ENCODE measurements at regions of chr7 and their contacts with region 1.

Region 1: GRCh38 chr7:97094284-97094930 is 23.1 kb upstream of the SDHAF3 start:
- DNase-seq: no peak
- ATAC-seq: no peak
- H3K4me3 Mint-ChIP-seq: no peak overlapping the region
- H3K27ac Mint-ChIP-seq: no peak overlapping the region
- H3K4me1 Mint-ChIP-seq: no peaks in the 10 kb centered on the region
- H3K27me3 Mint-ChIP-seq: no peaks in the 10 kb centered on the region
- CTCF ChIP-seq: no peak

Region 2: GRCh38 chr7:97104719-97105238 is 10.4 kb after region 1 on chr7:
- CTCF ChIA-PET with region 1: interaction called, 13 read pairs
- POLR2A ChIA-PET with region 1: interaction called, 3 read pairs
- DNase-seq: peak; percentile 92
- ATAC-seq: peak; percentile 100
- H3K4me3 Mint-ChIP-seq: no peak overlapping the region
- H3K27ac Mint-ChIP-seq: no peak overlapping the region
- H3K4me1 Mint-ChIP-seq: no peaks in the 10 kb centered on the region
- H3K27me3 Mint-ChIP-seq: peaks cover 5% of the 10 kb centered on the region; the same call in 1 of the 2 replicates
- CTCF ChIP-seq: peak; percentile 72; the same call in 1 of the 2 replicates

Measured in WTC11 (cell line).